Right cardiac atrium (tissue), 5 donors: ENCODE measurements at regions of chr18 and their contacts with region 1.

Region 1: DNA sequence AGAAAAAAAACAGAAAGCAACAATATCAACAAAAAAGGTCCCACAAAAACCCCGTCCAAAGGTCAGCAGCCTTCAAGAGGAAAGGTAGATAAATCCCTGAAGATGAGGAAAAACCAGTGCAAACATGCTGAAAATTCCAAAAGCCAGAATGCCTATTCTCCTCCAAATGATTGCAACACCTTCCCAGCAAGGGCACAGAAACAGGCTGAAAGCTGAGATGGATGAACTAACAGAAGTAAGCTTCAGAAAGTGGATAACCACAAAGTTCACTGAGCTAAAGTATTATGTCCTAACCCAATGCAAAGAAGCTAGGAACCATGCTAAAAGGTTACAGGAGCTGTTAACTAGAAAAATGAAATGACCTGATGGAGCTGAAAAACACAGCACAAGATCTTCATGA is 226.4 kb upstream of the DSEL start:
- DNase-seq: no peak
- ATAC-seq: no peak
- H3K4me3 ChIP-seq: no peak overlapping the region
- H3K27ac ChIP-seq: no peak overlapping the region
- H3K4me1 ChIP-seq: no peaks in the 10 kb centered on the region
- H3K27me3 ChIP-seq: no peaks in the 10 kb centered on the region

Region 2: DNA sequence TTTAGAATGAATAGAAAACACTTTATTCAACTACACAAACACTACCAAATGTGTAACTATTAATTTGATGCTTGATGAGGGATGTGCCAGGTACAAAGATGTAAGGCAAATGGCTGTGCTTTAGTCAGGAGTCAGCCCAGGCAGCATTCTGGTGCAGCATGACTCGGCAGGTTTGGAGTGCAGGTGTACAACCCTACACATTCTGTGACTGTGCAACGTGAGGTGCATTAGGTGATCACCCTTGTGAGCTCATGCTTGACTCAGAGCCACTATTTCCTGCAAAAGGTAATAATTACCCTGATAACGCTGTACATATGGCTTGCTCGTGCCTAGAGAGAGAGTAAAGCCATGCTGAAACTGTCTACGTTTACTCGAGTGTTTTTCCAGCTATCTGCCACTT is 62.3 kb after region 1 on chr18:
- intact Hi-C with region 1: loop called in 1 of 4 experiments (anchors 10 kb)
- DNase-seq: no peak
- ATAC-seq: no peak
- H3K4me3 ChIP-seq: no peak overlapping the region
- H3K27ac ChIP-seq: no peak overlapping the region
- H3K4me1 ChIP-seq: no peaks in the 10 kb centered on the region
- H3K27me3 ChIP-seq: no peaks in the 10 kb centered on the region